Left ventricle myocardium superior (tissue), 1 donor: ENCODE measurements at regions of chr18 and their contacts with region 1.

Region 1: DNA sequence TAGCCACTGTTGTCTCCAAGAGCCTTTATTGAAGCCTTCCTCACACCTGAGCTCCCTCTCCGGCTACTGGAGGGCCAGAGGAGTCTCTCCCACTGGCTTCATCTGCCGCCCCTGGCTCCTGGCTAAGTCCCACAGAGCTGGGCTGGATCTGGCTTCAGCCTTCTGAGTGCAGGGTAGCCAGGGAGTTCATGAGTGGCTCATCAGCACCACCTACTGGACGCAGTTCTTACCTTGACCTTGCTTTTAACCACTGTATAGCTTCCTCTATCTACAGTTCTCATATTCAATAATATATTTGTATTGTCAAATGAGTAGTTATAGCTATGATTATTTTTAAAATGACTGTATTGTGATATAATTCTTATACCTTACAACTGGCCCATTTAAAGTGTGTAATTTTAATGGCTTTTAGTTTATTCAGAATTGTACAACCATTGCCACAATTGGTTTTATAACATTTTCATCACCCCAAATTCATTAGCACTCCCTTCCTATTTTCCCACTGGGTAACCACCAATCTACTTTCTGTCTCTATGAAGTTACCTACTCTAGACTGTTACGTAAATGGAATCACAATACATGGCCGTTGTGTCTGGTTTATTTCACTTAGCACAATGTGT is 17.7 kb downstream of the CNDP1 start:
- DNase-seq: peak; percentile 77
- ATAC-seq: peak; percentile 96

Region 2: GRCh38 chr18:74116633-74117554 is 435.2 kb before region 1 on chr18:
- intact Hi-C with region 1: no loop called
- DNase-seq: no peak
- ATAC-seq: no peak

Region 3: GRCh38 chr18:74196220-74197119 is 355.6 kb before region 1 on chr18:
- intact Hi-C with region 1: loop called (anchors 5 kb)
- DNase-seq: no peak
- ATAC-seq: peak; percentile 72

Region 4: DNA sequence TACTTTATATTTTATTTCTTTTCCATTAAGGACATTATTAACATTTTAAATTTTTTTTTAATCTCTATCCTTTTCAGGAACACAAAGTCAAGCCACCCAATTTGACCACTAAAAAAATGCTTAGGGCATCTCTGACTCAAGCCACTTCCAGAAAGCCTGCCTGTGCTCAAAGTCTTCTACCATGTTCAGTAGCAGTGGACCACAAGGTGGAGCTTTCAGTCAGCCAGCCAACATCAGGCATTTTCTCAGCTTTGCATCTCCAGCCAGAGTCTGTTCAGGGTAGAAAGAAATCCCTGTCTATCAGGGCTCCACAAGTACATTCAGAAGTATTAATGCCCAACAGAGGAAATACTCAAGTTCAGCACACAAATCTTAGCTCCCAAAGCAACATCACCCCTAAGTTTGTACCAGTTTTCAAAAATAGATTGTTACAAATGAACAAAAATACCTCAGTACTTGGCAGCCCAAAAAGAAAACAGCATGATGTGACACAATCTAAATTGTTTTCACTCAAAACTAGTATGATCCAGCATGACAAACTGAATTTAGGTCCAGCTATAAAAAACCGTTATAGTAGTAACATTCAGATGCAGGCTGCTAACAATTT is 198.8 kb before region 1 on chr18:
- intact Hi-C with region 1: loop called (anchors 5 kb)
- DNase-seq: peak; percentile 46
- ATAC-seq: peak; percentile 94

Region 5: GRCh38 chr18:74589021-74589420 is 37.0 kb after region 1 on chr18:
- intact Hi-C with region 1: no loop called
- DNase-seq: no peak
- ATAC-seq: peak; percentile 35